ENCODE measurements at regions of chr22 and their contacts with region 1.

Region 1: GRCh38 chr22:24156913-24157821 is 24.1 kb upstream of the SUSD2 start:
- DNase-seq: peak; percentile 33 to 93 (median 62)

Region 2: GRCh38 chr22:24106385-24107381 is 50.5 kb before region 1 on chr22:
- intact Hi-C with region 1: loop called (anchors 5 kb)
- DNase-seq: peak in 2 of 10 donors; percentile 70 to 82

Region 3: DNA sequence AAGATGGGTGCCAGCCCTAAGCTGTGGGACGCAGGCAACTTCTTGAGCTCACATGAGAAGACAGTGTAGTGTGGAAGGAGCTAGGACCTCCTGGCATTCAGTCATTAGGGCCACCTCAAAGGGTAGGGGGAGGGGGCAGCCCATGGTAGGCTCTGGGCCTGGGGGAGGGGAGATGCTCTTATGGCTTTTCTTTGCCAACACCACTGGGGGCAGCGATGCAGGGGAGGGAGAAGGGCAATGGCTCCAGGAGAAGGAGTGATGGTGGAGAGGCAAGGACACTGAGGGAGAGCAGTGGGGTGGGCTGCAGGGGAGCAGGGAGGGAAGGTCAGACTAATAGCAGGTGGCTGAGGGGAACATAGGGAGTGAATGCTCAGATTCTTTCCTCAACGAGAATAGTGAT is 39.2 kb before region 1 on chr22:
- intact Hi-C with region 1: no loop called
- DNase-seq: peak in 2 of 10 donors; percentile 30 to 69

Region 4: GRCh38 chr22:24214467-24215285 is 57.5 kb after region 1 on chr22:
- intact Hi-C with region 1: no loop called
- DNase-seq: peak in 2 of 10 donors; percentile 55 to 65

Measured in posterior cingulate gyrus (tissue), 11 donors.